Caco-2 (cell line): ENCODE measurements at regions of chrX and their contacts with region 1.

Region 1: DNA sequence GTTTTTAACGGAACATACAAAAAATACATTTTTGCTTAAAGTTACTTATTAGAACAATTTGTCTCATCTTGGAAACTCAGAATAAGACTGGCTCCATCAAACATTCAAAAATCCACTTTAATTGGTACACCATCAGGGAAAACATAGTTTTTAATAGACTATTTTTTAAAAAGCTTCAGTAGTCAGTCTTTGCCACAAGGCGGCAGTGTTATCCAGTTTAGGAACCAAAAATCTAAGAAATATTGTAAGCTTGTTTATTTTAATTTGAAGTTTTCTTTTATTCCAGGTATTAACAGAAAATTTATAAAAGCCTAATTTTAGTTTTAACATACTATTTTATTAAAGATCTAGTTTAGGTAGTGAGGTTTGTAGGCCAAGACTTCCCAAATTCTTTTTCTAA is 107.7 kb downstream of the APOOL start:
- DNase-seq: peak in 1 of 2 experiments; percentile 2
- H3K4me3 ChIP-seq: no peak overlapping the region
- H3K4me3 Mint-ChIP-seq: no peak overlapping the region
- H3K27ac Mint-ChIP-seq: no peak overlapping the region
- H3K4me1 ChIP-seq: no peaks in the 10 kb centered on the region
- H3K4me1 Mint-ChIP-seq: no peaks in the 10 kb centered on the region
- H3K27me3 ChIP-seq: no peaks in the 10 kb centered on the region
- H3K27me3 Mint-ChIP-seq: no peaks in the 10 kb centered on the region
- CTCF ChIP-seq: peak in 1 of 2 experiments; percentile 61

Region 2: GRCh38 chrX:84924624-84925023 is 186.7 kb before region 1 on chrX:
- CTCF ChIA-PET with region 1: no interaction called
- POLR2A ChIA-PET with region 1: no interaction called
- intact Hi-C with region 1: no loop called
- DNase-seq: no peak
- H3K4me3 ChIP-seq: no peak overlapping the region
- H3K4me3 Mint-ChIP-seq: no peak overlapping the region
- H3K27ac Mint-ChIP-seq: no peak overlapping the region
- H3K4me1 ChIP-seq: no peaks in the 10 kb centered on the region
- H3K4me1 Mint-ChIP-seq: no peaks in the 10 kb centered on the region
- H3K27me3 ChIP-seq: no peaks in the 10 kb centered on the region
- H3K27me3 Mint-ChIP-seq: no peaks in the 10 kb centered on the region
- CTCF ChIP-seq: no peak

Region 3: DNA sequence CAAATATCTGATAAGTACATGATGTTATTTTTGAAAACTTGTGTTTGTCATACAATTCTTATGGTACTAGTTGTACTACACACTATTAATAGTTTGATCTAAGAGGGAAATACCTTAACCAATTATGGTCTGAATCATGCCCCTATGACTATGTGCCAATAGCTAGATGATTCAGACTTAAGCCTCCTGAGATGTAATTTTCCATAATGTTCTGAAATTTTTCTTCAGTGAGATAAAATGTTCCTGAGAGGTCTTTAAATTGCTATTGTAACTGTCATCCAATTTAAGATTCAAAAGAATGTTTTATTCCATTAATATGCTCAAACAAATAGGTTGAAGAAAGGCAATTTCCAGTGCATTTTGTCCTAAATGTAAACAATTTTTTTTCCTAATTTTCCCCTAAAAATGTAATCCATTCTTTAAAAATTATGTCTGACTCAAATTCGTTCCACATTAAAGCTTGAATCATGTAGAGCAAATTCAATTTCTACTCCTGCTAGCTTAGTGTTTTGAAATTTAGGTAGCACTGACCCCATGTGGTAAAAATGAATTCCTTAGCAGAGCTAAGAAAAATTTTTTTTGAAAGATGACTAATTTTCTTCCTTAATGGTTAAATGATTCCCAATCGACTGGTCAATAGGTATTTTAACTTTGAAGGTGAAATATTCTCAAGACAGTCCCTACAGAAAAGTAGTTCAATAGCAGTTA is 58.6 kb before region 1 on chrX:
- CTCF ChIA-PET with region 1: no interaction called
- POLR2A ChIA-PET with region 1: no interaction called
- intact Hi-C with region 1: no loop called
- DNase-seq: no peak
- H3K4me3 ChIP-seq: no peak overlapping the region
- H3K4me3 Mint-ChIP-seq: no peak overlapping the region
- H3K27ac Mint-ChIP-seq: no peak overlapping the region
- H3K4me1 ChIP-seq: no peaks in the 10 kb centered on the region
- H3K4me1 Mint-ChIP-seq: no peaks in the 10 kb centered on the region
- H3K27me3 ChIP-seq: no peaks in the 10 kb centered on the region
- H3K27me3 Mint-ChIP-seq: no peaks in the 10 kb centered on the region
- CTCF ChIP-seq: peak in 1 of 2 experiments; percentile 1

Region 4: DNA sequence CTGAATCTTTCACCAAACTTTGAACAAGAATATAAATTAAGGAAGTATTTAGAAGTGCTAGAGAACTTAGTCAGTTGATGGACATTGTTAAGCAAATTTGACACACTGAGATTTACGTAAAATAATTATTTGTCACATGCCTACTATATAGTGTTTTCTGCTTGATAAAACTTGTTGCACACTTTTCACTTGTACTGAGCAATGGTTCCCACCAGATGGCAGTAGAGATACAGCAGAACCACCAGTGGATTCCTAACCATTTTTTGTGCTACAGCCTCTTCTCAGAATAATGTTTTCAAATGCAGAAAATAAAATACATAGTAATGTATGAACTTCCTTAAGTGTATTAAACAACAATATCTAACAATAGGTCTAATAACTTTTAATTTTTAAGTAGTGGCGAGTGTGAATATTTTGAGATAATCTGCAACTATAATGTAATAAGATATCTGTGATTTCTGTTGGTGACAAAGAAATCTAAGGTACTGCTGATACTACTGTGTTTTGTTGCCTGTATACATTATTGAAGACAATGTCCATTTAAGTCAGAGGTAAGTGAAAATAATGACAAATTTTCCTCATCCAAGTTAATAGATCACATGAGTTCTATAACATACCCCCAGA is 26.5 kb before region 1 on chrX:
- CTCF ChIA-PET with region 1: no interaction called
- POLR2A ChIA-PET with region 1: no interaction called
- intact Hi-C with region 1: loop called (anchors 2 kb)
- DNase-seq: peak in 1 of 2 experiments; percentile 35
- H3K4me3 ChIP-seq: no peak overlapping the region
- H3K4me3 Mint-ChIP-seq: no peak overlapping the region
- H3K27ac Mint-ChIP-seq: no peak overlapping the region
- H3K4me1 ChIP-seq: no peaks in the 10 kb centered on the region
- H3K4me1 Mint-ChIP-seq: peaks cover 19% of the 10 kb centered on the region
- H3K27me3 ChIP-seq: no peaks in the 10 kb centered on the region
- H3K27me3 Mint-ChIP-seq: no peaks in the 10 kb centered on the region
- CTCF ChIP-seq: peak; percentile 58 to 64

Region 5: DNA sequence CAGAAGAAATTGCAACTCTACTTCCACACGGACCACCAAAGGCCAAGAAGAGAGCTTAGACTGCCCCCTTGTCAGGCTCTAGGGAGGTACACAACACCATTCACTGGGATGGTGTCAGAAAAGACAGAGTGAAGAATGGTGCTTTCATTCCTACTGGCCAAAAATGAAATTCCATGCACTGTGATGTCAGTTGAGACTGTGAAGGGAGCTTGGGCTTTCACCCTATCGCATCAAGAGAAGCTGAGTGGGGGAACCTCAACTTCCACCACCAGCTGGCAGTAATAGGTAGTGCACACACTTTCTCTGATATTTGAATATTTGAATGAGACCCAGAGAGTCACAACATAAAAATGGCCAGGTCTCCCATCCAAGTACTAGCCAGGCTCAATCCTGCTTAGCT is 198.4 kb after region 1 on chrX:
- CTCF ChIA-PET with region 1: interaction called, 6 read pairs
- POLR2A ChIA-PET with region 1: no interaction called
- intact Hi-C with region 1: loop called (anchors 1 kb)
- DNase-seq: peak in 1 of 2 experiments; percentile 3
- H3K4me3 ChIP-seq: no peak overlapping the region
- H3K4me3 Mint-ChIP-seq: no peak overlapping the region
- H3K27ac Mint-ChIP-seq: no peak overlapping the region
- H3K4me1 ChIP-seq: no peaks in the 10 kb centered on the region
- H3K4me1 Mint-ChIP-seq: no peaks in the 10 kb centered on the region
- H3K27me3 ChIP-seq: no peaks in the 10 kb centered on the region
- H3K27me3 Mint-ChIP-seq: no peaks in the 10 kb centered on the region
- CTCF ChIP-seq: no peak

Region 6: GRCh38 chrX:85544609-85545008 is 433.3 kb after region 1 on chrX:
- CTCF ChIA-PET with region 1: interaction called, 4 read pairs
- POLR2A ChIA-PET with region 1: no interaction called
- intact Hi-C with region 1: loop called (anchors 1 kb)
- DNase-seq: no peak
- H3K4me3 ChIP-seq: no peak overlapping the region
- H3K4me3 Mint-ChIP-seq: no peak overlapping the region
- H3K27ac Mint-ChIP-seq: no peak overlapping the region
- H3K4me1 ChIP-seq: no peaks in the 10 kb centered on the region
- H3K4me1 Mint-ChIP-seq: no peaks in the 10 kb centered on the region
- H3K27me3 ChIP-seq: no peaks in the 10 kb centered on the region
- H3K27me3 Mint-ChIP-seq: no peaks in the 10 kb centered on the region
- CTCF ChIP-seq: peak; percentile 22 to 41